Calu3 (cell line): ENCODE measurements at regions of chr7 and their contacts with region 1.

Region 1: GRCh38 chr7:151844071-151844824 is 32.7 kb downstream of the PRKAG2 start:
- DNase-seq: peak; percentile 17
- H3K4me3 Mint-ChIP-seq: no peak overlapping the region
- H3K27ac Mint-ChIP-seq: no peak overlapping the region
- H3K4me1 Mint-ChIP-seq: peaks cover 18% of the 10 kb centered on the region
- H3K27me3 Mint-ChIP-seq: no peaks in the 10 kb centered on the region
- CTCF ChIP-seq: no peak

Region 2: GRCh38 chr7:151860634-151861170 is 16.5 kb after region 1 on chr7:
- CTCF ChIA-PET with region 1: no interaction called
- intact Hi-C with region 1: loop called (anchors 1 kb)
- DNase-seq: no peak
- H3K4me3 Mint-ChIP-seq: no peak overlapping the region
- H3K27ac Mint-ChIP-seq: no peak overlapping the region
- H3K4me1 Mint-ChIP-seq: no peaks in the 10 kb centered on the region
- H3K27me3 Mint-ChIP-seq: peaks cover 57% of the 10 kb centered on the region
- CTCF ChIP-seq: no peak

Region 3: GRCh38 chr7:151936207-151936606 is 92.0 kb after region 1 on chr7:
- CTCF ChIA-PET with region 1: no interaction called
- intact Hi-C with region 1: loop called (anchors 1 kb)
- DNase-seq: no peak
- H3K4me3 Mint-ChIP-seq: no peak overlapping the region
- H3K27ac Mint-ChIP-seq: no peak overlapping the region
- H3K4me1 Mint-ChIP-seq: peaks cover 19% of the 10 kb centered on the region
- H3K27me3 Mint-ChIP-seq: peaks cover 73% of the 10 kb centered on the region
- CTCF ChIP-seq: no peak